ENCODE measurements at regions of chr12 and their contacts with region 1.

Region 1: DNA sequence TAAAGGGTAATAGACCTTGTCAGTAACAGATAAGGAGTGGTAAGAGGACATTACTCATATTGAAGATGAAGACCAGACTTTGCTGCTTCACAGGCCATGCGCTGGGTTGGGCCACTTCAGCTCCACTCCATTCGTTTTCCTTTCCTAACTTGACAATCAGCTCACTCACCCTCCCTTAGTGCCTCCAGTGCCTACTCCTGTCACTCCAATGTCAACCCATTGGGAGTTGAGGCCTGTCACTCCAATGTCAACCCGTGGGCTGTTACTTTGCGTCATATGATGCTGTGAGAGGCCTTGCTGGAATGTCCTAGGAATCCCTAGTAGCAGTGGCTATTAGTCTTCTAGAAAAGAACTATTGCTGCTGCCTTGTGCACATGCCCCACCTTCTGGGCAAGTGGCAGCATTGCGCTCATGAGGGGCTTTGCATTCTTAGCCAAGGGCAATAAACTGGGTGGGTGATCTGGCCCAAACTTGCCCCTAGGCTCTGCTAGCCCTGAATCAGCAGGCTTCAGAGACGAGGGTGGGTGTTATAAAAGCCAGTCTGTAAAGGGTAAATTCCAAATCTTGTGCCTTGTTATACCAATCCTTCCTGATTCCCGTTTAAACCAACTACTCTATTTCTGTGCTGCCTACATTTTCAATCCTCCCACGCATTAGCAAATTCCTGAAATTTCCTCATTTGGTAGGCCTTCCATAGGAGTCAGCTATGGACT is 36.1 kb downstream of the BAZ2A start:
- DNase-seq: peak; percentile 34 to 76 (median 65)
- ATAC-seq: peak; percentile 87
- H3K4me3 ChIP-seq: no peak overlapping the region
- H3K4me3 Mint-ChIP-seq: no peak overlapping the region
- H3K27ac ChIP-seq: no peak overlapping the region
- H3K27ac Mint-ChIP-seq: peak overlapping the region; percentile 77
- H3K4me1 ChIP-seq: no peaks in the 10 kb centered on the region
- H3K4me1 Mint-ChIP-seq: no peaks in the 10 kb centered on the region
- H3K27me3 ChIP-seq: no peaks in the 10 kb centered on the region
- H3K27me3 Mint-ChIP-seq: no peaks in the 10 kb centered on the region
- CTCF ChIP-seq: peak; percentile 91

Region 2: DNA sequence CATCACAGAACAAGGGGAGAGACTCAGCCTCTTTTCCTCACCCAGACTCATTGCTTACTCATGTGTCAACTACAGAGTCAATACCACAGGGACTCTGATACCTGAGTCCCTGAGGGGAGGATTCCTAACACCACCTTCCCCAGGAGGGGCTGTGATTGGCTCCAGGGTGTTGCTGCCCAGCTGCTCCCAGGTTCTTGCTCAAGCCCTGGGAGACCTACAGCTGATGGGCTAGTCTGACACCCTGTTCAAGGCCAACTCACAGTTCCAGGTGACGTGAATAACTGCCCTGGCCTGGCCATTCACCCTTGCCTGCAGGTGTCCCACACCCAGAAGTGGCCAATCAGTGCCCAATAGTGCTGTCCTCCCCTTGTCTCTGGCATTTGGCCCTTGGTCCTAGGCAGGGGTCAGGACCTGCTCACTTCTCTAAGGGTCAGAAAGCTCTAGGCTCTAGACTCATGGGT is 117.1 kb before region 1 on chr12:
- CTCF ChIA-PET with region 1: no interaction called
- POLR2A ChIA-PET with region 1: no interaction called
- intact Hi-C with region 1: no loop called
- DNase-seq: no peak
- ATAC-seq: no peak
- H3K4me3 ChIP-seq: no peak overlapping the region
- H3K4me3 Mint-ChIP-seq: no peak overlapping the region
- H3K27ac ChIP-seq: no peak overlapping the region
- H3K27ac Mint-ChIP-seq: no peak overlapping the region
- H3K4me1 ChIP-seq: no peaks in the 10 kb centered on the region
- H3K4me1 Mint-ChIP-seq: no peaks in the 10 kb centered on the region
- H3K27me3 ChIP-seq: no peaks in the 10 kb centered on the region
- H3K27me3 Mint-ChIP-seq: no peaks in the 10 kb centered on the region
- CTCF ChIP-seq: no peak

Region 3: GRCh38 chr12:56510786-56511185 is 83.3 kb before region 1 on chr12:
- CTCF ChIA-PET with region 1: interaction called, 106 read pairs
- POLR2A ChIA-PET with region 1: no interaction called
- intact Hi-C with region 1: loop called (anchors 1 kb)
- DNase-seq: no peak
- ATAC-seq: no peak
- H3K4me3 ChIP-seq: no peak overlapping the region
- H3K4me3 Mint-ChIP-seq: no peak overlapping the region
- H3K27ac ChIP-seq: no peak overlapping the region
- H3K27ac Mint-ChIP-seq: no peak overlapping the region
- H3K4me1 ChIP-seq: no peaks in the 10 kb centered on the region
- H3K4me1 Mint-ChIP-seq: peaks cover 4% of the 10 kb centered on the region
- H3K27me3 ChIP-seq: no peaks in the 10 kb centered on the region
- H3K27me3 Mint-ChIP-seq: peaks cover 3% of the 10 kb centered on the region
- CTCF ChIP-seq: no peak

Region 4: GRCh38 chr12:56581418-56582145 is 12.5 kb before region 1 on chr12:
- CTCF ChIA-PET with region 1: interaction called, 11 read pairs
- POLR2A ChIA-PET with region 1: no interaction called
- intact Hi-C with region 1: no loop called
- DNase-seq: peak in 6 of 9 experiments; percentile 13 to 78 (median 50)
- ATAC-seq: peak; percentile 92
- H3K4me3 ChIP-seq: no peak overlapping the region
- H3K4me3 Mint-ChIP-seq: peak overlapping the region; percentile 37
- H3K27ac ChIP-seq: peak overlapping the region in 1 of 2 experiments; percentile 58
- H3K27ac Mint-ChIP-seq: peak overlapping the region; percentile 58
- H3K4me1 ChIP-seq: peaks cover 19% of the 10 kb centered on the region
- H3K4me1 Mint-ChIP-seq: peaks cover 16% of the 10 kb centered on the region
- H3K27me3 ChIP-seq: no peaks in the 10 kb centered on the region
- H3K27me3 Mint-ChIP-seq: no peaks in the 10 kb centered on the region
- CTCF ChIP-seq: no peak

Region 5: DNA sequence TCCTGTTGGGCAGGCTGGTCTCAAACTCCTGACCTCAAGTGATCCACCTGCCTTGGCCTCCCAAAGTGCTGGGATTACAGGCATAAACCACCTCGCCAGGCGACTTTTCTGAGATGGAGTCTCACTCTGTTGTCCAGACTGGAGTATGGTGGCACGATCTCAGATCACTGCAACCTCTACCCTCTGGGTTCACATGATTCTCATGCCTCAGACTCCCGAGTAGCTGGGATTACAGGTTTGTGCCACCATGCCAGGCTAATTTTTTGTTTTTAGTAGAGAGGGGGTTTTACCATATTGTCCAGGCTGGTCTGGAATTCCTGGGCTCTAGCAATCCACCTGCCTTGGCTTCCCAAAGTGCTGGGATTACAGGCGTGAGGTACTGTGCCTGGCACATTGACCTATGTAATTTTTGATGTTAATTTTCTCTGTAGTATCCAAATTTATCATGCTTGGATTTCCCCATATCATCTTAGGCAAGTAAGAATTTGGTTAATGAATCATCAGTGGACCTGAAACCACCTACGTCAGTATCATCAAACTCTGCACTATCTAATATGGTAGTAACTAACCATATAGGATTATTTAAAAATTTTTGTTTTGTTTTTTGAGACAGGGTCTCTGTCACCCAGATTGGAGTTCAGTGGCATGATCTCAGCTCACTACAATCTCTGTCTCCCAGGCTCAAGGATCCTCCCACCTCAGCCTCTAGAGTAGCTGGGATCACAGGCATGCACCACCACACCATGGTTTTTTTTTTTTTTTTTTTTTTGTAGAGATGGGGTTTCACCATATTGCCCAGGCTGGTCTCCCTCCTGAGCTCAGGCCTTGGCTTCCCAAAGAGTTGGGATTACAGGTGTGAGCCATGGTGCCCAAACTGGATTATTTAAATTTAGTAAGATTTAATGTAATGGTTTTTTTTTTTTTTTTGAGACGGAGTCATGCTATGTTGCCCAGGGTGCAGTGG is 63.6 kb after region 1 on chr12:
- CTCF ChIA-PET with region 1: no interaction called
- POLR2A ChIA-PET with region 1: no interaction called
- intact Hi-C with region 1: no loop called
- DNase-seq: no peak
- ATAC-seq: no peak
- H3K4me3 ChIP-seq: no peak overlapping the region
- H3K4me3 Mint-ChIP-seq: no peak overlapping the region
- H3K27ac ChIP-seq: no peak overlapping the region
- H3K27ac Mint-ChIP-seq: no peak overlapping the region
- H3K4me1 ChIP-seq: no peaks in the 10 kb centered on the region
- H3K4me1 Mint-ChIP-seq: no peaks in the 10 kb centered on the region
- H3K27me3 ChIP-seq: no peaks in the 10 kb centered on the region
- H3K27me3 Mint-ChIP-seq: no peaks in the 10 kb centered on the region
- CTCF ChIP-seq: no peak

Measured in CD8-positive, alpha-beta T cell (primary cell).